Colonic mucosa (tissue), 4 donors: ENCODE measurements at regions of chr13 and their contacts with region 1.

Region 1: GRCh38 chr13:21625366-21625765 is 21.4 kb upstream of the MICU2 start:
- DNase-seq: peak; percentile 29
- H3K4me3 ChIP-seq: no peak overlapping the region
- H3K27ac ChIP-seq: no peak overlapping the region
- H3K4me1 ChIP-seq: no peaks in the 10 kb centered on the region
- H3K27me3 ChIP-seq: no peaks in the 10 kb centered on the region
- CTCF ChIP-seq: peak; percentile 36

Region 2: DNA sequence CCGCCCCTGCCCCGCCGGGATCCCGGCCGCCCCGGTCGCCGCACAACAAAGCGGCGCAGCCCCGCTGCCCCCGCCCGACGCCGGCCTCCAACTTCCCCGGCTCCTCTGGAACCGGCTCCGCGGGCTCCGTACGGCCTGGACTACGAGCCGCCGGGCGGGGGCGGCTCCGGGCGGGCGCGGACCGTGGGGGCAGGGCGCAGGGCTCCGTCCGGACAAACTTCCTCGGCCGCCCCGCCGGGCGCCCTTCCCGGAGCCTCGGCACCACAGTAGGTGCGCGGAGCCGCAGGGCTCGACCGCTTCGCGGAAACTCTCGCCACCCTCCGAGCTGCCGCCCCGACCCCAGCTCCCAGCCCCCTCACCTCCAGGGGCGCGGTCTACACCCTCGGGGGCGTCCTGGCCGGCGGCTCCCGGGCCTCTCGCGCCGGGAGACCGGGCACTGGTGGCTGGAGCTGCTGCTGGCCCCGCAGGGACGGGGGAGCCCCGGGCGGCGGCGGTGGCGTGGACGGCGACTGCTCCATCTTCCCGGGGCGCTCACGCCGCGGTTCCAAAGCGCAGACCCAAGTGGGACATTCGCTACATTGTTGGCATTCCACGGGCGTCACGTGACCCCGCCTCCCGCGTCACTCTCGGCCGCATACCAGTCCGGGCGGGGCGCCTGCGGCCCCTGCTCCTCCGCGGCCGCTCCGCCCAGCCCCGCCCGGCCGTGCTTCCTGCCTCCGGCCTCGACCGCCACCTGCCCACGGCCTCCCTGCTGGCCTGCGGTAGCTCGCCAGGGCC is 564.2 kb before region 1 on chr13 and contains the start of gene LATS2:
- intact Hi-C with region 1: no loop called
- DNase-seq: peak; percentile 95
- H3K4me3 ChIP-seq: peak within 1 kb of the TSS; percentile 86
- H3K27ac ChIP-seq: peak within 1 kb of the TSS; percentile 92
- H3K4me1 ChIP-seq: peaks cover 10% of the 10 kb centered on the region
- H3K27me3 ChIP-seq: no peaks in the 10 kb centered on the region
- CTCF ChIP-seq: no peak
- total RNA-seq, gene LATS2: 3.7 to 11.3 TPM

Region 3: DNA sequence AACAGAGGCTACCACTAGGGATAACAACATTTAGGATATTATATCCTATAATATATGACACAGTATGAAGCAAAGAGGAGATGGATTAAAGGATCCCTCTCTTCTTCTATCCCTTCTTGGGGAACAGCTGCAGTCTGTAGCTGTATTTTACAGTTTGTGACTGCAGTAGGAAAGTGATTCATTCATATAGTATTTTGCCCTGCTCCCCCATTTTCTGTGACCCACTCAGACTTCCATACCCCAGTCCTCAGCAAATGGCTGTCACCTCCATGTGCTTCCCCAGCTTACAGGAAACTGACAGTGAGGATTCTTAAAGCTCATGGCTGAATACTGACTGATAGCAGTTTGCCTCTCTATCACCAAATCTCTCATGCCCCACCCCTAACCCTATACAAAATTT is 48.9 kb before region 1 on chr13:
- intact Hi-C with region 1: no loop called
- DNase-seq: no peak
- H3K4me3 ChIP-seq: no peak overlapping the region
- H3K27ac ChIP-seq: no peak overlapping the region
- H3K4me1 ChIP-seq: no peaks in the 10 kb centered on the region
- H3K27me3 ChIP-seq: no peaks in the 10 kb centered on the region
- CTCF ChIP-seq: no peak

Region 4: DNA sequence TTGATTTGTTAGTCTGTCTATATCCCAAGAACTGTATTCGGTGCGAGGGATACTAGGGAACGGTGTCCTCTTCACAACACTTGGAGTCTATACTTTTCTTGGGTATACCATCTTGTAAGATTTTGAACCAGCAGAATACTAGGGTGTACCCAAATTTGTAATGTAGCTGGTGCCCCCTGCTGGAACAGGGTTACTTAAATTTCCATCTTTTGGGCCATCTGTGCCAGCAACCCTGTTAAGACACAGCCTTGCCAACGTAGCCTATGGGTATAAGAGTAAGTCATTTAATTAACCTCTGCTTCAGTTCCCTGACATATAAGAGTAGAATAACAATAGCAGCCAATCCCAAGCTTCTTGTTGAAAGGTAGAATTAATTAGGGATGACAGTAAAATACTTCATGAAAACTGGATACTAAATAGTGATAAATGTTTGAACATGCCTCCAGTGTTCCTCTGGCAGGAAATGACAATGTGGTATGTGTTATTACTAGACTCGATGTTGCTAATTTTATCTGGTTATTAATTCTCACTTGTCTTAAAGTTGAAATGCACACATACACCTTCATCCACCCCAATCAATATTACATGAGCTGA is 653.1 kb after region 1 on chr13:
- intact Hi-C with region 1: loop called (anchors 10 kb)
- DNase-seq: peak; percentile 66
- H3K4me3 ChIP-seq: no peak overlapping the region
- H3K27ac ChIP-seq: no peak overlapping the region
- H3K4me1 ChIP-seq: no peaks in the 10 kb centered on the region
- H3K27me3 ChIP-seq: no peaks in the 10 kb centered on the region
- CTCF ChIP-seq: no peak